PC-3 (cell line): ENCODE measurements at regions of chr1 and their contacts with region 1.

Region 1: DNA sequence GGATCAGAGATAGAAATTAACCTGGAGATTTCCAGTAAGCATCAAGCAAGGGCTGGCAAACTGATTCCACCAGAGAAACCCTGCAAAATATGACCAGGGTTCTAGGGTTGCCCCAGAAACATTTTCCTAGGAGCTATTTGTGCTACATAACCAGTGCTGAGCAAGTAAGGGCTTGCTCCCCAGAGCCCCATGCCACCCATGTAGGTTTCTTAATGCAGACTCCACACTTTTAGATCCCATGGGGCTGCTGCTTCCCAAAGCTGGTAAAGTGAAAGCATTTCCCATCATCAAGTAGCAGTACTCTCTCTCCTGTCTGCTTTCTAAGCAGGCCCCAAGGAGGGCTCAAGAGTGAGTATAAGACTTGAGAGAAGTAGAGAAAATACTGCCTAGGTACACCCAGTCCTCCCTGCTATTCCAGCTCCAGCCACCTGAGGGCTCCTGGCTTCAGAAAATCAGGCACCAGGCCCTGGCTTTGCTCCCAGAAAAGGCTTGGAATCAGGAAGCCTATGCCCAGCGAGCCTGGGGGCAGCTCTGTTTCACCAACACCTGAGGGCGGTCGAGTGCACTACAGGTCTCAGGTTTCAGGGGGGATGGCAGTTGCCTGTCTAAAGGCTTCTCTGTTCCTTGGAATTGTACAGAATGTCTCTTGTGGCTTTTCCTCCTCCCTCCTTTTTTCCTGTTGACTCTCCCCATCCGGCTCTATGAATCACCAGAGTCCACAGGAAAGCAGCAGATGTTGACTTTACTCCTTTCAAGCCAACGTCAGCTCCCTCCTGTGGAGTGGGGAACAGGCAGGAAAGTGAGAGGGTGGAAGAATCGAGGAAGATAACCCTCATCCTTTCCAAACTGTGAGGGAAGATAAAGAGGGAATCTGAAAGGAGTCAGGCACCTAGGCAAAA is 6.2 kb upstream of the ANKRD35 start:
- DNase-seq: peak; percentile 100
- ATAC-seq: peak; percentile 92
- H3K4me3 ChIP-seq: peak overlapping the region; percentile 50
- H3K27ac ChIP-seq: peak overlapping the region; percentile 95
- H3K4me1 ChIP-seq: peaks cover 44% of the 10 kb centered on the region
- H3K27me3 ChIP-seq: no peaks in the 10 kb centered on the region
- CTCF ChIP-seq: peak; percentile 100

Region 2: GRCh38 chr1:145757420-145757819 is 134.4 kb before region 1 on chr1:
- CTCF ChIA-PET with region 1: no interaction called
- POLR2A ChIA-PET with region 1: no interaction called
- intact Hi-C with region 1: no loop called
- DNase-seq: no peak
- ATAC-seq: peak; percentile 54
- H3K4me3 ChIP-seq: no peak overlapping the region
- H3K27ac ChIP-seq: no peak overlapping the region
- H3K4me1 ChIP-seq: peaks cover 14% of the 10 kb centered on the region
- H3K27me3 ChIP-seq: no peaks in the 10 kb centered on the region
- CTCF ChIP-seq: no peak

Region 3: GRCh38 chr1:145845514-145846161 is 46.2 kb before region 1 on chr1 and contains the start of gene NUDT17:
- CTCF ChIA-PET with region 1: interaction called, 13 read pairs
- POLR2A ChIA-PET with region 1: no interaction called
- intact Hi-C with region 1: loop called (anchors 1 kb)
- DNase-seq: peak; percentile 78
- ATAC-seq: peak; percentile 77
- H3K4me3 ChIP-seq: peak within 1 kb of the TSS; percentile 66
- H3K27ac ChIP-seq: no peak within 1 kb of the TSS
- H3K4me1 ChIP-seq: peaks cover 5% of the 10 kb centered on the region; the same call in 1 of the 2 replicates
- H3K27me3 ChIP-seq: no peaks in the 10 kb centered on the region
- CTCF ChIP-seq: peak; percentile 98
- total RNA-seq, gene NUDT17: 2.4 and 3.0 TPM in 2 replicates

Region 4: GRCh38 chr1:145906954-145907753 is 15.3 kb after region 1 on chr1:
- CTCF ChIA-PET with region 1: interaction called, 29 read pairs
- POLR2A ChIA-PET with region 1: interaction called, 5 read pairs
- intact Hi-C with region 1: loop called (anchors 1 kb)
- DNase-seq: no peak
- ATAC-seq: no peak; the same call in 1 of the 2 replicates
- H3K4me3 ChIP-seq: no peak overlapping the region
- H3K27ac ChIP-seq: no peak overlapping the region
- H3K4me1 ChIP-seq: peaks cover 11% of the 10 kb centered on the region
- H3K27me3 ChIP-seq: no peaks in the 10 kb centered on the region
- CTCF ChIP-seq: no peak

Region 5: DNA sequence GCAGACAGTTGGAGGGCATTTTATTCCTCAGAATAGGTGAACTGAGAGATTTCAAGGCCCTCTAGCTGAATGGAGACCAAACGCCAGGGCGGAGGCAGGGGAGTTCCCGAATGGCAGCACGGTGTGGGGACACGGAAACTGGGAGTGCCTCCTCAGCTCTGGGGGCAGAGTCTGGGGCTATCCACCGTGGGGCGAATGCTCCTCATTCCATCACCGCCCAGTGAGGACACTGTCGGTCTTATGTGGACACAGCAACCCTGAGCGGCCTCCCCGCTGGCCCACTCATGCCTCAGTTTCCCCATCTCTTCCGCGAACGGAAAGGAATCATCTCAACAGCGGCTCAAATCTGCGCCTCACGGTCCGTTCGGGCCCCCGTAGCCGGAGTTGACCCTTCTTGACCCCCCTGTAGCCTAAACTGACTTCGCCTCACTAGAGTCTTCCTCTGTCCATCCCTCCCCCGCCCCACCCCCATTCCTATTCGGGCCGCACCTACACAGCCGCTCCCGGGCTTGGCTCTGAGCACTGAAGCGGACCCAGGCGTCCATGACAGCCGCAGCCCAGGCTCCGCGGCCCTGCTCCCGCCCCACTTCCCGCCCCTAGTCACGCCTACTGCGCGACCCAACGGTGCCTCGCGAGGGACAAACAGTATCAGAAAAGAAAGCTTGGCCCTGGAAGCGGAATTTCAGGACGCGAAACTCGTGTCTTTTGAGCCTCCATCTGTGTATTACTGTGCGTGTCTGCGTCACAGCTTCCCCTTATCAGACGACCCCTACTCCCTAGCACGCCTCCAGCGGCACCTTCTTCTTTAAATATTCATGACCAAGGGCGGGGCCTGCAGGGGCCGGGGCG is 26.5 kb after region 1 on chr1 and contains the start of gene PEX11B:
- CTCF ChIA-PET with region 1: interaction called, 6 read pairs
- POLR2A ChIA-PET with region 1: interaction called, 6 read pairs
- intact Hi-C with region 1: loop called (anchors 1 kb)
- DNase-seq: peak; percentile 86
- ATAC-seq: peak; percentile 79
- H3K4me3 ChIP-seq: peak within 1 kb of the TSS; percentile 81
- H3K27ac ChIP-seq: peak within 1 kb of the TSS; percentile 72
- H3K4me1 ChIP-seq: peaks cover 24% of the 10 kb centered on the region
- H3K27me3 ChIP-seq: no peaks in the 10 kb centered on the region
- CTCF ChIP-seq: no peak
- total RNA-seq, gene PEX11B: 27.4 and 31.3 TPM in 2 replicates

Region 6: GRCh38 chr1:145963995-145964901 is 72.4 kb after region 1 on chr1 and contains the starts of genes ANKRD34A and POLR3GL:
- CTCF ChIA-PET with region 1: interaction called, 5 read pairs
- POLR2A ChIA-PET with region 1: no interaction called
- intact Hi-C with region 1: loop called (anchors 1 kb)
- DNase-seq: peak; percentile 99
- ATAC-seq: peak; percentile 84
- H3K4me3 ChIP-seq: peak within 1 kb of the TSS; percentile 76
- H3K27ac ChIP-seq: peak within 1 kb of the TSS; percentile 3; the same call in 1 of the 2 replicates
- H3K4me1 ChIP-seq: peaks cover 35% of the 10 kb centered on the region
- H3K27me3 ChIP-seq: no peaks in the 10 kb centered on the region
- CTCF ChIP-seq: no peak
- total RNA-seq, gene ANKRD34A: 0.29 and 2.8 TPM in 2 replicates
- total RNA-seq, gene POLR3GL: 3.7 and 8.4 TPM in 2 replicates

Region 7: DNA sequence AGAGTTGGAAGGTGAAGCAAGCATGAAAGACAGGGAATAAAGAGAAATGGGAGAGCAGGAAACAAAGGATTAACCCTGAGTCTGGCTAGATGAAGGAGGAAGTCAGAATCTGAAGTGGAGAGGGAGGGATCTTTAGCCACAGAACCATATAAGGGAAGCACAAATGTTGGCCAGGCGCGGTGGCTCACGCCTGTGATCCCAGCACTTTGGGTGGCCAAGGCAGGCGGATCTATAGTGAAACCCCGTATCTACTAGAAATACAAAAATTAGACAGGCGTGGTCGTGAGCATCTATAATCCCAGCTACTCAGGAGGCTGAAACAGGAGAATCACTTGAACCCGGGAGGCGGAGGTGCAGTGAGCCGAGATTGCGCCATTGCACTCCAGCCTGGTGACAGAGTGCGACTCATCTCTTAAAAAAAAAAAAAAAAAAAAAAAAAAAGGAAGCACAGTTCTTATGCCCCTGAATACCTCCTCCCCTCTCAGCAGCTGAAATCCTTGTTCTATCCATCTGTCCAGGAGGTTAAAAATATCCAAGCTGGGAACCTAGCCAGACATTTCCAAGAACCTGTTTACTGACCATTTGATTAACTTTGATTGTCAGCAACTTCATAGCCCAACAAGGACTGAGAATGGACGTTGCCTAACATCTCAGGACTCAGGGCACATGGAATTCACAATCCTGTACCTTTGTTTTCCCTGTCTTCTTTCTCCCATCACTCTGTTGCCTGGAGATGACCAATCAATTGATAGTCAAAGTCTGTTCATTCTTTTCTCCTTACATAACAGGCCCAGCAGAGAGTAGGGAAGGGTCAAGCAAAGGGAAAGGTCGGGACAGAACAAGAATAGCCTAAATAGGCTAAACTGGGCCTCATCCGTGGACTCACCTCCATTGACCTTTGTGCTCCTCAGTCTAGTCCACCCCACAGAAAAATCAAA is 93.9 kb after region 1 on chr1:
- CTCF ChIA-PET with region 1: no interaction called
- POLR2A ChIA-PET with region 1: no interaction called
- intact Hi-C with region 1: no loop called
- DNase-seq: peak; percentile 87
- ATAC-seq: peak; percentile 63
- H3K4me3 ChIP-seq: no peak overlapping the region
- H3K27ac ChIP-seq: peak overlapping the region; percentile 17
- H3K4me1 ChIP-seq: peaks cover 31% of the 10 kb centered on the region
- H3K27me3 ChIP-seq: no peaks in the 10 kb centered on the region
- CTCF ChIP-seq: no peak